Vagina (tissue), 2 donors: ENCODE measurements at regions of chr17 and their contacts with region 1.

Region 1: DNA sequence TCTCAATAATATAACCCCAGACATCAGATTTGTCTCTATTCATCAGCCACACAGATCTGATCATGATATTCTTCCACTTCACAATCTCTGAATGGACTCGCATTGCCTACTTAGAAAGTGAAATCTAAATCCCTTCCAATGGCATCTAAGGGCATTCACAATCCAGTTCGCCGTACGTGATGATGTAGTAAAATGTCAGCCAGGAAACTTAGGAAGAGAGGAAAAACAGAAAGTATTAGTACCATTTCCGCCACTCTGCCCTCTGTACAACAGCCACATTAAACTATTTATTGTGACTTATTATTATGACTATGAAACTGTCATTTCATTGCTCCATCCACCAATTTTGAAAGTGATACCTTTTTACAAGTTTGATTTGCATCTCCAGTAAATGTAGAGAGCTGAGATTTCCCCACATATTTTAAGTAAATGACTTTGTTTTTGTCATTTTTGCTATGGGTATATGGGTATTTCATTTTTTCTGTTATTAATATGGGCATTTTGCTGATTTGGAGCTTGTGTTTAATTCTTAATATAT is 69.4 kb upstream of the SMIM36 start:
- DNase-seq: no peak
- H3K4me3 ChIP-seq: no peak overlapping the region
- H3K27ac ChIP-seq: no peak overlapping the region
- H3K4me1 ChIP-seq: peaks cover 18% of the 10 kb centered on the region
- H3K27me3 ChIP-seq: no peaks in the 10 kb centered on the region
- CTCF ChIP-seq: no peak
- POLR2A ChIP-seq: no peak

Region 2: DNA sequence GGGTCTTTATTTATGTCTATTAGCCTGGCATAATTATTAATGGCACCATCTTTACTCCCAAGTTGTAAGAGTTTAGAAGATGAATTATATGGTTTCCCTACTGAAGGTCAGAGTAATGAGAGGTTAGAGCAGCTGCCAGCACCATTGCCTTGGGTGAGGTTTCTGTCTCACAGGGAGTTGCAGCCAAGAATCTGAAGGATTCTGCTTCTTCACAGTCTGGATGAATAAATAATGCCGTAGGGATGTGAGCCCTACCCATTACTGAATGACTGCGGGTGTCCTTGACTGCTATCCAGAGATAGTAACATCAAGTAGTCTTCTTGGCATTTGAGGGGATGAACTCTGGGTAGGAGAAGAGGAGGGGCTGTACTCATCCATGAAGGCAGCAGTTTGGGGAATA is 16.6 kb before region 1 on chr17:
- intact Hi-C with region 1: loop called (anchors 2 kb)
- DNase-seq: no peak
- H3K4me3 ChIP-seq: no peak overlapping the region
- H3K27ac ChIP-seq: no peak overlapping the region
- H3K4me1 ChIP-seq: peaks cover 7% of the 10 kb centered on the region
- H3K27me3 ChIP-seq: no peaks in the 10 kb centered on the region
- CTCF ChIP-seq: no peak
- POLR2A ChIP-seq: no peak

Region 3: GRCh38 chr17:55601874-55602364 is 21.3 kb after region 1 on chr17:
- intact Hi-C with region 1: no loop called
- DNase-seq: no peak
- H3K4me3 ChIP-seq: no peak overlapping the region
- H3K27ac ChIP-seq: no peak overlapping the region
- H3K4me1 ChIP-seq: peaks cover 7% of the 10 kb centered on the region
- H3K27me3 ChIP-seq: no peaks in the 10 kb centered on the region
- CTCF ChIP-seq: peak in 2 of 3 experiments; percentile 12 to 62
- POLR2A ChIP-seq: no peak